OCI-LY7 (cell line): ENCODE measurements at regions of chr19 and their contacts with region 1.

Region 1: DNA sequence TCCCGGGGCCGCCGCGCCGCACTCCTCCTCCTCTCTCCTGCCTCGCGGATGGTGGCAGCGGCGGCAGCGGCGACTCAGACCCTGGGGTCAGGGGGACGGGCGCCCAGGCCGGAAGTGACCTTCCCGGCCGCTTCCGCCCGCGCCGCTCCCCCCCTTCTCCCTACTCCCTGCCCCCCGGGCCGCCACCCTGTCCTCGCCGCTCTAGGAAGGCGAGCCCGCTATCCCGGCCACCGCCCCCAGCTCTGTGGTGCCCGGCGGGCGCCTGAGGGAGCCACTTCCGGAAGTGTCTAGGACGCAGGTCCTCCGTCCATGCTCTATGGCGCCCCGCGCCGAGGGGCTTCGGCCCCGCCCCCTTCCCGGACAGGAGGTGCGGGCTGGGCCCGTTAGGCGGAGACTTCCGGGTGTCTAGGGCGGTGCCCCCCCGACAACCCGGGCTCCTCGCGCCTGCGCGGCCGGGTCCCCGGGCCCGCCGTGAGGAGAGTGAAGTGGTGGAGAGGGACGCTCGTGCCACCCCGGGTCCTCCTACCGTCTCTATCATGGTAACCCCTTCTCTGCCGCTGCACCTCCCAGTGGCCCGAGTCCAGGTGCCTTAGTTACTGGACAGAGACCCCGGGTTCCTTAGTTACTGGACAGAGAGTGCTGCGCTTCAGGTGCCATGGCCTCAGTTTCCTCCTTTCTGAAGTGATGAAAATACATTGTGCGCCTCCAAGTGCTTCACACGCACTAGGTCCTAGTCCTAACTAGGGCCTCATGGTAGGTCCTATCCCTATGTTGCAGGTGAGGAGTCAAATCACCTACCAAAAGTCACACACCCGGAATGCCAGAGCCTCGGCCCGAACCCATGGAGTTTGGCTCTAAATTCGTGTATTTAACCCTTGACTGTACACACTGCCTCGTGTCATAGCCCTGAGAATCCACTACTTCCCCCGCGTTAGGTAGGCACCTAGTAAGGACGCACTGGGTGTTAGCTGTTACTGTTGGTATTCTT is at the start of gene ZNF787:
- DNase-seq: peak; percentile 99
- H3K4me3 ChIP-seq: peak within 1 kb of the TSS; percentile 83
- H3K27ac ChIP-seq: peak within 1 kb of the TSS; percentile 63
- H3K4me1 ChIP-seq: peaks cover 23% of the 10 kb centered on the region
- CTCF ChIP-seq: no peak
- total RNA-seq, gene ZNF787: 30.6 and 36.5 TPM in 2 replicates

Region 2: GRCh38 chr19:56015756-56016155 is 105.7 kb before region 1 on chr19:
- CTCF ChIA-PET with region 1: no interaction called
- POLR2A ChIA-PET with region 1: no interaction called
- intact Hi-C with region 1: no loop called
- DNase-seq: peak; percentile 7
- H3K4me3 ChIP-seq: no peak overlapping the region
- H3K27ac ChIP-seq: no peak overlapping the region
- H3K4me1 ChIP-seq: no peaks in the 10 kb centered on the region
- CTCF ChIP-seq: no peak

Region 3: GRCh38 chr19:56140583-56141416 is 19.3 kb after region 1 on chr19 and contains the start of gene ZNF444:
- CTCF ChIA-PET with region 1: no interaction called
- POLR2A ChIA-PET with region 1: no interaction called
- intact Hi-C with region 1: loop called (anchors 1 kb)
- DNase-seq: peak; percentile 98
- H3K4me3 ChIP-seq: peak within 1 kb of the TSS; percentile 87
- H3K27ac ChIP-seq: peak within 1 kb of the TSS; percentile 36
- H3K4me1 ChIP-seq: peaks cover 13% of the 10 kb centered on the region
- CTCF ChIP-seq: no peak
- total RNA-seq, gene ZNF444: 22.0 and 41.7 TPM in 2 replicates

Region 4: DNA sequence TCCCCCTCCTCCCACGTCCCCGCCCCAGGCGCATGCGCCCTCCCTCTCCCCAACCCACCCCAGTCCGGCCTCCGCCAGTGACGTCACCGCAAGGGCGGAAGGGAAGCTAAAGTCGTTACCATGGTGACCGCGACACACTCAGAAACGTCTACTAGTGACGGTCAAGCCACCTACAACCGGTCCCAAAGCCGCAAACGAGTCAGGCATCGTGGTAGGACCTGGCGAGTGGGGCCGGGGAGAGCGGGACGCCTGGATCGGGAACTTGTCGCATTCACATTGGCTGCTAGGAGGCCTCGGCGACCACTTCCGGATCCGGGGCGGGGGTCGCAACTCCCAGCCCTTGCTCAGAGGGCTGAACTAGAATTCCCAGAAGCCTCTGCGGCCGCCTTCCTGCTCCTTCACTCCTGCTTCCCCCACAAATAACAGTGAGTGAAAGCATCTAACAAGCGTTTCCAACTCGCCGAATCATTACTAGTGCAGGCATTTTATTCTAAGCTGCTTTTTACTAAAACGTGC is 193.1 kb after region 1 on chr19 and contains the start of gene ZSCAN5A:
- CTCF ChIA-PET with region 1: no interaction called
- POLR2A ChIA-PET with region 1: interaction called, 3 read pairs
- intact Hi-C with region 1: loop called (anchors 2 kb)
- DNase-seq: peak; percentile 94
- H3K4me3 ChIP-seq: peak within 1 kb of the TSS; percentile 75
- H3K27ac ChIP-seq: peak within 1 kb of the TSS; percentile 78
- H3K4me1 ChIP-seq: peaks cover 15% of the 10 kb centered on the region
- CTCF ChIP-seq: no peak
- total RNA-seq, gene ZSCAN5A: 9.9 and 19.2 TPM in 2 replicates